Tibial artery (tissue), 4 donors: ENCODE measurements at regions of chr14 and their contacts with region 1.

Region 1: GRCh38 chr14:39432179-39432618 is at the start of gene FBXO33:
- DNase-seq: peak; percentile 96 to 98
- H3K4me3 ChIP-seq: peak within 1 kb of the TSS; percentile 71 to 79
- H3K27ac ChIP-seq: peak within 1 kb of the TSS; percentile 91 to 94
- H3K4me1 ChIP-seq: peaks cover 0 to 42% (median 19%) of the 10 kb centered on the region in 4 donors
- H3K27me3 ChIP-seq: no peaks in the 10 kb centered on the region
- CTCF ChIP-seq: no peak

Region 2: GRCh38 chr14:39102969-39103957 is 328.9 kb before region 1 on chr14 and contains the start of gene SEC23A:
- intact Hi-C with region 1: loop called (anchors 5 kb)
- DNase-seq: peak; percentile 94 to 96
- H3K4me3 ChIP-seq: peak within 1 kb of the TSS; percentile 95 to 99
- H3K27ac ChIP-seq: peak within 1 kb of the TSS; percentile 99
- H3K4me1 ChIP-seq: peaks cover 0 to 45% (median 12%) of the 10 kb centered on the region in 4 donors
- H3K27me3 ChIP-seq: no peaks in the 10 kb centered on the region
- CTCF ChIP-seq: no peak

Region 3: DNA sequence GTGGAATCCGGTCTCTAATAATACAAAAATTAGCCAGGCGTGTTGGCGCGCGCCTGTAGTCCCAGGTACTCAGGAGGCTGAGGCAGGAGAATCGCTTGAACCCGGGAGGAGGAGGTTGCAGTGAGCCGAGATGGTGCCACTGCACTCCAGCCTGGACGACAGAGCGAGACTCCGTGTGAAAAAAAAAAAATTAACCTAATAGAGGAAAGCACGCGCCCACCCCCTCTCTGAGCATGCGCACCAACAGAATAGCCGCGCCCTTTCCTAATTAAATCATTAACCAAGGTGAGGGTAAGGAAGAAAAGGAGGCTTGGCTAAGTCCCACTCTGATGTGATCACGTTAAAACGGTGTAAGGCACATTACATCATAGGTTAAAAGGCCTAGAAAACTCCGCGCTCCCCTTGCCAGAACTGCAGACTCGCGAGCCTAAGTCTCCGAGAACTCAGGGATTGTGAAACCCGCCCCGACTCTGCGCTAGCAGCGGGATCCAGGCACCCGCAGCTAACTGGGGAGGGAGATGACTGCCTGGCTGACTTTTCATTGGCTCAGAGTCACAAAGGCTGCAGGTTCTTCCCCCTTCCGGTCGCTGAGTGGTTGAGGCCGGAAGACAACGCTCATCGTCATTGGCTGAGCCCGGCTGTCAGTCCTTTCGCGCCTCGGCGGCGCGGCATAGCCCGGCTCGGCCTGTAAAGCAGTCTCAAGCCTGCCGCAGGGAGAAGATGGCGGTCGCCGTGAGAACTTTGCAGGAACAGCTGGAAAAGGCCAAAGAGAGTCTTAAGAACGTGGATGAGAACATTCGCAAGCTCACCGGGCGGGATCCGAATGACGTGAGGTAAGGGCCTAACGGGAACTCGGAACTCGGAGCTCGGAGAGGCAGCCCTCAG is 257.4 kb before region 1 on chr14 and contains the start of gene PNN:
- intact Hi-C with region 1: loop called (anchors 5 kb)
- DNase-seq: peak; percentile 97 to 99
- H3K4me3 ChIP-seq: peak within 1 kb of the TSS; percentile 78 to 86
- H3K27ac ChIP-seq: peak within 1 kb of the TSS; percentile 84 to 90
- H3K4me1 ChIP-seq: peaks cover 0 to 24% (median 16%) of the 10 kb centered on the region in 4 donors
- H3K27me3 ChIP-seq: no peaks in the 10 kb centered on the region
- CTCF ChIP-seq: peak in 1 of 2 experiments; percentile 37

Region 4: GRCh38 chr14:39266871-39267591 is 165.2 kb before region 1 on chr14:
- intact Hi-C with region 1: loop called (anchors 5 kb)
- DNase-seq: peak; percentile 77 to 89
- H3K4me3 ChIP-seq: peak overlapping the region; percentile 90 to 98
- H3K27ac ChIP-seq: peak overlapping the region; percentile 99
- H3K4me1 ChIP-seq: peaks cover 0 to 41% (median 14%) of the 10 kb centered on the region in 4 donors
- H3K27me3 ChIP-seq: no peaks in the 10 kb centered on the region
- CTCF ChIP-seq: no peak